ENCODE measurements at regions of chr7 and their contacts with region 1.

Region 1: GRCh38 chr7:3092468-3092867 is 48.8 kb upstream of the CARD11 start:
- DNase-seq: peak; percentile 89
- H3K4me3 Mint-ChIP-seq: peak overlapping the region; percentile 36
- H3K27ac Mint-ChIP-seq: peak overlapping the region; percentile 96
- H3K4me1 Mint-ChIP-seq: peaks cover 72% of the 10 kb centered on the region
- H3K27me3 Mint-ChIP-seq: no peaks in the 10 kb centered on the region

Region 2: GRCh38 chr7:2863461-2864066 is 228.9 kb before region 1 on chr7:
- CTCF ChIA-PET with region 1: interaction called, 13 read pairs
- POLR2A ChIA-PET with region 1: no interaction called
- DNase-seq: peak; percentile 87
- H3K4me3 Mint-ChIP-seq: peak overlapping the region; percentile 49
- H3K27ac Mint-ChIP-seq: peak overlapping the region; percentile 69
- H3K4me1 Mint-ChIP-seq: peaks cover 29% of the 10 kb centered on the region
- H3K27me3 Mint-ChIP-seq: peaks cover 4% of the 10 kb centered on the region

Region 3: GRCh38 chr7:3106361-3106826 is 13.9 kb after region 1 on chr7:
- CTCF ChIA-PET with region 1: interaction called, 36 read pairs
- POLR2A ChIA-PET with region 1: interaction called, 69 read pairs
- DNase-seq: peak; percentile 71
- H3K4me3 Mint-ChIP-seq: peak overlapping the region; percentile 22
- H3K27ac Mint-ChIP-seq: peak overlapping the region; percentile 99
- H3K4me1 Mint-ChIP-seq: peaks cover 93% of the 10 kb centered on the region
- H3K27me3 Mint-ChIP-seq: no peaks in the 10 kb centered on the region

Region 4: GRCh38 chr7:3112479-3113134 is 20.1 kb after region 1 on chr7:
- CTCF ChIA-PET with region 1: interaction called, 36 read pairs
- POLR2A ChIA-PET with region 1: interaction called, 78 read pairs
- DNase-seq: peak; percentile 86
- H3K4me3 Mint-ChIP-seq: peak overlapping the region; percentile 36
- H3K27ac Mint-ChIP-seq: peak overlapping the region; percentile 89
- H3K4me1 Mint-ChIP-seq: peaks cover 94% of the 10 kb centered on the region
- H3K27me3 Mint-ChIP-seq: no peaks in the 10 kb centered on the region

Region 5: DNA sequence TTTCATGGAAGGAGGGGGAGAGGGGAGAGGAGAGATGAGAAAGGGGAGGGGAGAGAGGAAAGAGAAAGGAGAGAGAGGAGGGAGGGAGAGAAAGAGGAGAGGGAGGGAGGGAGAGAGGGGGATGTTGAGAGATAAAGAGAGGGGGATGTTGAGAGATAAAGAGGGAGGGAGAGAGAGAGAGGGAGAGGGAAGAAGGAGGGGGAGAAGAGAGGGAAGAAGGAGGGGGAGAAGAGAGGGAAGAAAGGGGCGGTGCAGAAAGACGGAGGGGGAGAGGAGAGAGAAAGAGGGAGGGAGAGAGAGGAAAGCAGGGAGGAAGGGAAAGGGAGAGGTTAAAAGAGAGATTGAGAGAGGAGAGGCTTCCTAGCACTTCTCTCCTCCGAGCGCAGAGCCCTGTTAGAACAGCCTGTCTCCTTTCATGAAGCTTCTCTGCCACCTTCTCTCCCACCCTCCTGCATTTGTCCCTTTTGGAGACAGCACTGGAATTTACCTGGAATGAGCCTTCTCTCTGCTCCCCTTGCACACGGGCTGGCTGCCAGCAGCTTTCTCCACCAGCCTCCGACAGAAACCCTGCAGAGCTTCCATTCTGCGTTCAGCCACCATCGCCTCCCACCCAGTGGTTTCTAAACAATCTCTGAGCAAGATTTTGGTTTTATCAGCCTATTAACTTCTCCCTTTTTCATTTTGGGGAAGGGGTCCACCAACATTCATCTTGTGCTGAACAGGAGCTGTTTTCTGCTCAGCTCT is 25.2 kb after region 1 on chr7:
- CTCF ChIA-PET with region 1: interaction called, 12 read pairs
- POLR2A ChIA-PET with region 1: interaction called, 78 read pairs
- DNase-seq: peak; percentile 57
- H3K4me3 Mint-ChIP-seq: peak overlapping the region; percentile 90
- H3K27ac Mint-ChIP-seq: peak overlapping the region; percentile 94
- H3K4me1 Mint-ChIP-seq: peaks cover 87% of the 10 kb centered on the region
- H3K27me3 Mint-ChIP-seq: peaks cover 3% of the 10 kb centered on the region

Region 6: GRCh38 chr7:3154912-3155494 is 62.5 kb after region 1 on chr7:
- CTCF ChIA-PET with region 1: interaction called, 17 read pairs
- POLR2A ChIA-PET with region 1: interaction called, 3 read pairs
- DNase-seq: peak; percentile 70
- H3K4me3 Mint-ChIP-seq: no peak overlapping the region
- H3K27ac Mint-ChIP-seq: peak overlapping the region; percentile 23
- H3K4me1 Mint-ChIP-seq: peaks cover 29% of the 10 kb centered on the region
- H3K27me3 Mint-ChIP-seq: peaks cover 17% of the 10 kb centered on the region